ENCODE measurements at regions of chr3 and their contacts with region 1.

Region 1: GRCh38 chr3:49539659-49540560 is 14.4 kb upstream of the BSN start:
- DNase-seq: peak; percentile 97 to 98 (median 98)
- ATAC-seq: peak; percentile 80 to 94 (median 84)
- H3K4me3 ChIP-seq: peak overlapping the region; percentile 24 to 53 (median 45)
- H3K27ac ChIP-seq: peak overlapping the region; percentile 39 to 91 (median 70)
- H3K4me1 ChIP-seq: peaks cover 0 to 53% (median 19%) of the 10 kb centered on the region in 4 donors
- H3K27me3 ChIP-seq: no peaks in the 10 kb centered on the region
- CTCF ChIP-seq: peak; percentile 85 to 93 (median 89)
- POLR2A ChIP-seq: peak; percentile 87

Region 2: DNA sequence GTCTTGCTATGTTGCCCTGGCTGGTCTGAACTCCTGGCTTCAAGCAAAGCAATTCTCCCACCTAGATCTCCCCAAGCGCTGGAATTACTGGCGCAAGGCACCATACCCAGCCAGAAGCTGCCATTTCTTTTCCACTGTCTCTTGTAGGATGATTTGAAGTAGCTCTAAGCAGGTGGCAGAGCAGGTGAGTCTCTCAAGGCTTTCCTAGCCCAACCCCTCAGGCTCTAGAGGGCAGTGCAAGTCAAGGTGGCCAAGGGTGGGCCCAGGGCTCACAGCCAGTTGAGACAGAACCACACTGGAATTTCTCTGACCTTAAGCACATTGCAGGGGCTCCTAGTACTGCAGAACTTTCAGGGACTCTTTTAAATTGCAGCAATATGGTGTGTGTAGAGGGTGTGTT is 85.5 kb before region 1 on chr3:
- intact Hi-C with region 1: no loop called
- DNase-seq: no peak
- ATAC-seq: peak; percentile 56 to 81 (median 73)
- H3K4me3 ChIP-seq: no peak overlapping the region
- H3K27ac ChIP-seq: no peak overlapping the region
- H3K4me1 ChIP-seq: no peaks in the 10 kb centered on the region
- H3K27me3 ChIP-seq: no peaks in the 10 kb centered on the region
- CTCF ChIP-seq: peak; percentile 13 to 47 (median 26)
- POLR2A ChIP-seq: no peak

Region 3: GRCh38 chr3:49469936-49470713 is 69.8 kb before region 1 on chr3 and contains the start of gene DAG1:
- intact Hi-C with region 1: no loop called
- DNase-seq: peak; percentile 98 to 99 (median 99)
- ATAC-seq: peak; percentile 90 to 93 (median 90)
- H3K4me3 ChIP-seq: peak within 1 kb of the TSS; percentile 85 to 96 (median 93)
- H3K27ac ChIP-seq: peak within 1 kb of the TSS; percentile 74 to 95 (median 88)
- H3K4me1 ChIP-seq: peaks cover 0 to 34% (median 13%) of the 10 kb centered on the region in 4 donors
- H3K27me3 ChIP-seq: no peaks in the 10 kb centered on the region
- CTCF ChIP-seq: no peak
- POLR2A ChIP-seq: peak; percentile 93
- total RNA-seq, gene DAG1: 54.5 to 92.5 (median 65.2) TPM

Region 4: DNA sequence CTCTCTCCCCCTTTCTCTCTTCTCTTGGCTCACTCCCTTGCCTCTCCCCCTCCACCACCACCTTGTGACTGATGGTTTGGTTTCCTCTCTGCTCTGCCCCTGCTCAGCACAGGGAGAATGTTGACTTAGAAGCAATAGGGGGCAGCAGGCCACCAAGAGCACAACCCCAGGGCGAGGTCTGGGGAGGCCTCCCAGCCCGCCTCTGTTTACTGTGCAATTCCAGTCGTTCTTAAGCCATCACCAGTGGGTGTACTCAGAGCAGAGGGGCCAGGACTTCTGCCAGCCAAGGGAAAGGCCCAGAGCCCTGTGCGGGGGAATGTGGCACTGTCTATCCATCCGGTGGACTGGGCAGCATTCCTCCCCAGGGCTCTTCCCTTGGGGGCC is 128.5 kb after region 1 on chr3:
- intact Hi-C with region 1: loop called (anchors 5 kb)
- DNase-seq: peak in 1 of 3 donors; percentile 86
- ATAC-seq: peak; percentile 2 to 35 (median 12)
- H3K4me3 ChIP-seq: no peak overlapping the region
- H3K27ac ChIP-seq: peak overlapping the region in 2 of 3 donors; percentile 23 to 92
- H3K4me1 ChIP-seq: peaks cover 2 to 85% (median 38%) of the 10 kb centered on the region in 4 donors
- H3K27me3 ChIP-seq: no peaks in the 10 kb centered on the region
- CTCF ChIP-seq: peak in 1 of 4 donors; percentile 5
- POLR2A ChIP-seq: no peak

Region 5: DNA sequence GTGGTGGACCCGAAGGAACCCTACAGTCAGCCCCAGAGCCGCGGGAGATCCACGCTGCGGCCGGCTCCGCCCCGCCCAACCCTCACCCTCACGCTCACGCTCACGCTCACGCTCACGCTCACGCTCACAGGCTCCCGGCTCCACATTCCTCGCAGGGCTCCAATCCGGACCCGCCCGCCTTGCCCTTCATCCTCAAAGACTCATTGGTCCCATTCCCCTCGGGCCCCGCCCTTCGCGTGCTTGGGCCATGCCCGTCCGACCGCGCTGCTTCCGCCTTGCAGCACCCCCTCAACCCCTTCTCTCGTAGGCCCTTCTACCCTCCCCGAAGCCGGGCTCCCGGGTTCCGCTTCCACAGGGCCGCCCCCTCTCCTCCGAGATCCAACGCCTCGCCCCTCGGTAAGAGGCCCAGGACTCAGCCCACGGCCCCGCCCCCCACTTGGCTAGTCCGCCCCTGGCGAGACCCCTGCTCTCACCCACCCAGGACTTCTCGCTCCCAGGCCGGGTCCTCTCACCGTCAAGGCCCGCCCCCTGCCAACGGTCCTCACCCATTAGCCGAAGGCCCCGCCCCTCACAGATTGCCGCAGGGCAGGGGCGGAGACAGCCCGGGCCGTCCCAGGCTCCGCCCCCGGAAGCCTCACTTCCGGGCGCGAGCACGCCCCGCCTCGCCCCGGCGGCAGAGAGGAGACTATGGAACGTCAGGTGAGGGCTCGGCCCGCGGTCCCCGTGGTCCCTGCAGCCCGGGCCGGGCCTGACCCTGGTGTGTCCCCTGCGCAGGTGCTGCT is 134.0 kb after region 1 on chr3 and contains the start of gene APEH:
- intact Hi-C with region 1: loop called (anchors 5 kb)
- DNase-seq: peak; percentile 98 to 99 (median 99)
- ATAC-seq: peak; percentile 79 to 87 (median 82)
- H3K4me3 ChIP-seq: peak within 1 kb of the TSS; percentile 75 to 86 (median 84)
- H3K27ac ChIP-seq: peak within 1 kb of the TSS; percentile 77 to 90 (median 86)
- H3K4me1 ChIP-seq: peaks cover 2 to 51% (median 18%) of the 10 kb centered on the region in 4 donors
- H3K27me3 ChIP-seq: no peaks in the 10 kb centered on the region
- CTCF ChIP-seq: no peak
- POLR2A ChIP-seq: peak; percentile 77
- total RNA-seq, gene APEH: 60.9 to 114 (median 90.5) TPM

Measured in right lobe of liver (tissue), 6 donors.